Sciatic nerve (tissue), 2 donors: ENCODE measurements at regions of chr4 and their contacts with region 1.

Region 1: GRCh38 chr4:931960-932712 is at the starts of genes GAK and TMEM175:
- DNase-seq: peak; percentile 97
- ATAC-seq: peak; percentile 99
- total RNA-seq, gene GAK: 96.6 TPM
- total RNA-seq, gene TMEM175: 26.8 TPM

Region 2: DNA sequence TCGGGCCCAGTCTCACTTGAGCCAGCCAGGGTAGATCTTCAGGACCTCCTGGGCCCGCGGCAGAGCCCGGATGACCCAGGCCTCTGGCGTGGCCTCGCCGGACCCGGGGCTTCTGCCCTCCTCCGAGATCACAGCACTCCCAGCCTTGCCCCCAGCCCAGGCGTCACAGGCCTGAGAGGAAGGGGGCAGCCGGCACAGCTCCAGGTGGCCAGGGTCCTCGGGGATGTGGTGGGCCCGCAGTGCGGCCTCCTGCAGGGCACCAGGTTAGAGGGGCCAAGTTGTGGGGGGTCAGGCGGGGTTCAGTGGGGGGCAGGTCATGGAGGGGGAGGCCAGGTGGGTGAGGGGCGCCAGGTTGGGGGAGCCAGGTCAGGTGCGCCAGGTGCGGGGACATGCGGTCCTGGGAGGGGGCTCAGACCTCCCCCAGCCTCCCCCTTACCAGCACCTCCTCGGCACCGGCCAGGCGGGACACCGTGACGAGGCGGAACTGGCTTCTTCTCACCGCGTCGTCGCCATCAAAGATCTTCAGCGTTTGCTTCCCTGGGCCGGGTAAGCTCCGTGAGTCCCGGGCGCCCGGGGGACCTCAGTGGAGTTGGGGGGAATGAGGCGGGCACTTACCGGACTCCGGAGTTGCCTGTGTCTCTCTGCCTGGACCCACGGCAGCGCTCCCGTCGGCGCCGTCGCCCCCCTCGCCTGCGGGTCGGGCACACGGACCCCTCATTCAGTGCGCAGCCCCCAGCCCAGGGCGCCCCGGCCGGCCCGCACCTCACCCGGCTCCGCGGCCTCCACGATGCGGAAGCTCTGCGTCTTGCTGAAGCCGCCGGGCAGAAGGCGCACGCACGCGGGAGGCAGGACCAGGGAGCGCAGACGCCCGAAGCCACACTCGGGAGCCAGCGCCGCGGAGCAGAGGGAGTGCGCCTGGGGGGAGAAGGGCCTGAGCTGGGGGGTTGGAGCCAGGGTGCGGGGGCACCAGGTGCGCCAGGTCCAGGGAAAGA is 35.3 kb after region 1 on chr4:
- intact Hi-C with region 1: loop called (anchors 2 kb)
- DNase-seq: no peak
- ATAC-seq: no peak

Region 3: GRCh38 chr4:1351854-1352633 is 419.9 kb after region 1 on chr4:
- intact Hi-C with region 1: no loop called
- DNase-seq: peak; percentile 93
- ATAC-seq: peak; percentile 55